GM10248 (cell line): ENCODE measurements at regions of chr12 and their contacts with region 1.

Region 1: GRCh38 chr12:104358347-104359003 is 54.9 kb downstream of the EID3 start:
- DNase-seq: peak; percentile 83
- CTCF ChIP-seq: peak; percentile 92

Region 2: GRCh38 chr12:104201238-104202001 is 157.1 kb before region 1 on chr12:
- CTCF ChIA-PET with region 1: interaction called, 13 read pairs
- POLR2A ChIA-PET with region 1: no interaction called
- DNase-seq: peak; percentile 62
- CTCF ChIP-seq: peak; percentile 90

Region 3: GRCh38 chr12:104219908-104220530 is 138.5 kb before region 1 on chr12:
- CTCF ChIA-PET with region 1: interaction called, 15 read pairs
- POLR2A ChIA-PET with region 1: no interaction called
- DNase-seq: no peak
- CTCF ChIP-seq: no peak

Region 4: DNA sequence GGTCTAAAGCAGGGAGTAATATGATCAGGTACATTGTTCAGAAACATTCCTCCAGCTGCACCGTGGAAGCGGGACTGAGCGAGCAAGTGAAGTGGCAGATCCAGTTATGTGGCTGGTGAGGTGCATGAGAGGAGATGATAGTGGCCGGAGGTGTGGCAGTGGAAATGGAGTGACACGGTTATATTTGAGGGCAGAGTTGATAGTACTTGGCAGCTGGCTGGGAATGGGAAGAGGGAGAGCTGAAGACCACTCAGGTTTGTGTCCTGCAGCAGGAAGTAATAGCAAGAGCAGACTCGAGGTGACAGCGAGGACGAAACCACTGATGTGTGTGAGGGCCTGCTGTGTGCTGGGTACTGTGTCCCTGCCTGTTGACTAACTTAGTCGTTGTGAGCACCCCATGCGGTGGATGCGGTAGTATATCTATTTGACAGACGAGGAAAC is 15.7 kb before region 1 on chr12:
- CTCF ChIA-PET with region 1: interaction called, 16 read pairs
- POLR2A ChIA-PET with region 1: no interaction called
- DNase-seq: no peak
- CTCF ChIP-seq: no peak

Region 5: DNA sequence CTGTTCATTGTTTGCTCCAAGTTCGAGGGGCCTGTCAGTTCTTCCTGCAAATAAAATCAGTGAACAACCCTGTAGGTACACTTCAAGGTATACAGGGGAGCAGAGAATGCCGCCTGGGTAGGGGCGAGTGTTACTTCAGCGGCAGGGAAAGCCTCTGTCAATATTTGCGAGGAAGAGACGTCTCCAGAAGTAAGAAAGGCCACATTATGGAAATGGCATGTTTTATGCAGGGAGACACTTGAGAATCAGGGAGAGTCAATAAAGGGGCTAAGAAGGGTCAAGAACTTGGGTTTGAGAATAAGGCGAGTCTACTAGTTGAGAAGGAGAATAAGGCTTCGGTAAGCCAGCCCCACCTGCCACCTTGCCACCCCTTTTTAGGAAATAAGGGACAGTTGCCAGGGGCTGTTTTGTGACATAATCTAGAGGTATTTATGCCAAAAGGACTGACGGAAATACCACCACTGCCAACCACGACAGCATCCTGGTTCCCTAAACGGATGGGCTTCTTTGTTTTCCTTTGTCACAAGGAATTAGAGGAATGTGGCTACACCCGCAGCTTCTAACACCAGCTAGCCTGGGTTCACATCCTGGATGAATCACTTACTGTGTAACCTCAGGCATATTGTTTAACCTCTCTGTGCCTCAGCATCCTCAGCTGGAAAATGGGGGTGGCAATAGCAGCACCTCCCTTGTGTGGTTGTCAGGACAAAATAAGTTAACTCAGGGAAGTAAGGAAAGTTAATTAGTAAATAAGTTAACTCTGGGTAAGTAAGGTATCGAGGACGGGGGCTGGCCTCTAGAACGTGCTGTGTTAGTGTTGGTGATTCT is 12.8 kb after region 1 on chr12:
- CTCF ChIA-PET with region 1: interaction called, 12 read pairs
- POLR2A ChIA-PET with region 1: no interaction called
- DNase-seq: no peak
- CTCF ChIP-seq: no peak

Region 6: DNA sequence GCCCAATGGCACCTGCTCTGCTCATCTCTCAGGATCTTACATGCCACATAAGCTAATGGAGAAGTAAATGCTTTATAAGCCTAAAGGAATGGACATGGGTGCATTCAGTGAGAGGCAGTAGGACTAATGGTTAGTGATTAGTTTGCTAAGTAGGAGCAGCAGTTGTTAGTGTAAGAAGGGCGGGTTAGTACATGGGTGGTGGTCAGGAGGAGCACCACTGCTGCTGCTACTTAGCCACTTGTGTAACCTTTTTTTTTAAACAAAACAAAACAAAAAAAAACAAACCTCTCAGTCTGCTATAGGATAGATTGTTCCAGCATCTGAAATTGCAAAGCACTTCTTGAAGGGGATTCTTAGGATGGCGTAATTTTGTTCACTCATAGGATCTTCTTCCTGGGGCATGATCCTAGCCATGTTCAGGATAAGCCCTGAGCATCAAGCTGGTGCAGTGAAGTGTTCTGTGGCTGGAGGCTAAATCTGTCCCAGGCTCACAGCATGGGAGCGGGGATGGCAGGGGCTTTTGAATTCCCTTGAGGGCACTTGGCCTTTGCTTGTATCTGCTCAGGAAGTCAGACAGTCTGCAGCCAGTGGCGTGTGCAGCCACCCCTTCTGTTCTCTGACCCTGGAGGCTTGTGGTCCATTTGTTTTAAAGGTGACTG is 161.9 kb after region 1 on chr12:
- CTCF ChIA-PET with region 1: no interaction called
- POLR2A ChIA-PET with region 1: no interaction called
- DNase-seq: no peak
- CTCF ChIP-seq: no peak